OCI-LY7 (cell line): ENCODE measurements at regions of chr1 and their contacts with region 1.

Region 1: DNA sequence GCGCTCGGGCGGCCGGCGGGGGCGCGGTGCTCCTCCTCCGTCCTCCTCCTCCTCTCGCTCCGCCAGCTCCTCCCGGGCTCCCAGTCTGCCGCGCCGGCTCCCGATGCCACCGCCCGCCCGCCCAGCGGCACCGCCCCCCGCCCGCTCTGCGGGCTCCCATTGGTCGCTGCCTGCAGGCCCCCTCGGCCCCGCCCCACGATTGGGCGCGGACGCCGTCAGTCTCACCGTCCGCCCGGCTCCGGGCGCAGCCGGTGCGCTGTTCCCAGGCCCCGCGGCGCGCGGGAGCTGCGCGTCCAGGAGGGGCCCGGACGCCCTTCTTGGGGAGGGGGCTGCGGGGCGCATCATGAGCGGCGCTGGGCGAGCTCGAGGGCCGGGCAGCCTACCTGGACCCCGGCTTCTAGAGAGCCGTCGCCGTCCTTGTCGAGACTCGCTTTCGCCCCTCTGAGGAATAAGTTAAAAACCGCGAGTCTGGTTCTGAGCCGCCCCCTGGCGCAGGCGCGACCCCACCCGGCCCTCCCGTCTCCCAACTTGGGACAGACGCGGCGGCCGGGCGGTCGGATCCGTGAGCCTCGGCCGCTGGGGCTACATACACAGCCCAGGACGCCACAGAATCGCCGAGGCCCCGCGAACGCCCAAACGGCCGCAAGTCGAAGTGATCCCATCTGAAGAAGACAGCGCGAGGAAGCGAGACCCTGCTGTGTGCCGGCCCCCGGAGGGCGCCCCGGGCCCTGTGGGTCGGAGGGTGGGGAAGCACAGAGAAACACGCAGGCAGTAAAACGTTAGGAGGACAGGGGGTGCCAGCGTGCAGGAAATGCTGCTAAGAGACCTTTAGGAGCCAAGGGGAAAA is at the start of gene SIPA1L2:
- DNase-seq: peak; percentile 89
- H3K4me3 ChIP-seq: peak within 1 kb of the TSS; percentile 73
- H3K27ac ChIP-seq: peak within 1 kb of the TSS; percentile 62
- H3K4me1 ChIP-seq: peaks cover 42% of the 10 kb centered on the region
- CTCF ChIP-seq: peak; percentile 78
- total RNA-seq, gene SIPA1L2: 13.5 and 16.0 TPM in 2 replicates

Region 2: GRCh38 chr1:231866392-231867331 is 763.6 kb before region 1 on chr1:
- CTCF ChIA-PET with region 1: no interaction called
- POLR2A ChIA-PET with region 1: no interaction called
- intact Hi-C with region 1: loop called (anchors 1 kb)
- DNase-seq: peak; percentile 64
- H3K4me3 ChIP-seq: no peak overlapping the region
- H3K27ac ChIP-seq: no peak overlapping the region
- H3K4me1 ChIP-seq: no peaks in the 10 kb centered on the region
- CTCF ChIP-seq: peak; percentile 97

Region 3: DNA sequence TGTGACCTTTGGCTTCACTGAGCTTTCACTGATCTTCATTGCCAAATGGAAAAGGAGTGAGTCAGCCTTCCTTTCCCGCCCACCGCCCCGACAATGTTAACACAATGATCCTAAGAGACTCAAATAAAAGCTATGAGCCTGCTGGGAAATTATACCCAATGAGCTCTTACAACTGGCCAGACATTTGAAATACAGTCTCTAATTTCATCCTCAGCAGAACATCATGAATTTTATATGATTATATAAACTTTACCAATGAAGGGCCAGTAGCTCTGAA is 252.8 kb before region 1 on chr1:
- CTCF ChIA-PET with region 1: no interaction called
- POLR2A ChIA-PET with region 1: no interaction called
- intact Hi-C with region 1: no loop called
- DNase-seq: no peak
- H3K4me3 ChIP-seq: no peak overlapping the region
- H3K27ac ChIP-seq: no peak overlapping the region
- H3K4me1 ChIP-seq: no peaks in the 10 kb centered on the region
- CTCF ChIP-seq: no peak

Region 4: GRCh38 chr1:232548681-232549080 is 81.6 kb before region 1 on chr1:
- CTCF ChIA-PET with region 1: no interaction called
- POLR2A ChIA-PET with region 1: interaction called, 11 read pairs
- intact Hi-C with region 1: no loop called
- DNase-seq: no peak
- H3K4me3 ChIP-seq: no peak overlapping the region
- H3K27ac ChIP-seq: peak overlapping the region; percentile 2
- H3K4me1 ChIP-seq: peaks cover 67% of the 10 kb centered on the region
- CTCF ChIP-seq: no peak

Region 5: GRCh38 chr1:232562855-232563510 is 67.3 kb before region 1 on chr1:
- CTCF ChIA-PET with region 1: interaction called, 5 read pairs
- POLR2A ChIA-PET with region 1: interaction called, 9 read pairs
- intact Hi-C with region 1: loop called (anchors 2 kb)
- DNase-seq: peak; percentile 85
- H3K4me3 ChIP-seq: peak overlapping the region; percentile 33
- H3K27ac ChIP-seq: peak overlapping the region; percentile 96
- H3K4me1 ChIP-seq: peaks cover 100% of the 10 kb centered on the region
- CTCF ChIP-seq: no peak

Region 6: DNA sequence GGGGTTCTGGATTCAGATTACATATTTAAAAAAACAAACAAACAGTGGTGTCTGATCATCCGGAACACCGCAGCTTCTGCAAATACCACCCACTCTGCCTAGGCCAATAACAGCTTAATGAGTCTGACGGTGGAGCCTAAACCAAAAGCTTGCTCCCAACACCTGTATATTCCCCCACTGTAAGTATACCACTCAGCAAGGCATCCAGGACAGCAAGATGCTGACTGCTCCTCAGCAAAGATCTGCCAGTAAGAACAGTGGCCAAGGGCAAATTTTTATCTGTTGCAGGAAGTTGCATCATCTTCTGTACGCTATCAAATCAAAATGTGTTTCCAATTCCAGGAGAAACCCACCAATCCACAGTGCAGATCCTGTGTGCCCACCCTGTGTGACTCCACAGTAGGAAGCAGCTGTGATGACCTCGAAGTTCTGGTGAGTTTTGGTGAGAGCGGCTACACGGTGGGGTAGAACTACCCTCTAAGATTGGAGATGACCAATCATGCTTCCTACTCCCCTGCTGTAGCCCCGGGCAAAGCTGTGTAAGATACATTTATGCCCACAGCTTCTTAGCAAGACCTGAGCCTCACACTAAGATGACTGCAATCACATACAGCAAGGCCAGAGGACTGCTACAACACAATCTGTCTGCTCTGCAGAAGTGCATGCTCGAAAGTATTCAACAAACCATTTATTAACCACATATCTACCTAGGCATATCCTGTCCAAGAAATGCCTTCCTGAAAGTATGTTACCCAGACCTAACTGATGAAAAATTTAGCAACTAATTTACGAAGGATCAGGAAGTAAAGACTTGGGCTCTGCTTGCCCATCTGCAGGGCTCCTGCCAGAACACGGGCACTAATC is 30.9 kb before region 1 on chr1:
- CTCF ChIA-PET with region 1: interaction called, 6 read pairs
- POLR2A ChIA-PET with region 1: interaction called, 23 read pairs
- intact Hi-C with region 1: loop called (anchors 2 kb)
- DNase-seq: peak; percentile 69
- H3K4me3 ChIP-seq: peak overlapping the region; percentile 29
- H3K27ac ChIP-seq: peak overlapping the region; percentile 42
- H3K4me1 ChIP-seq: peaks cover 73% of the 10 kb centered on the region
- CTCF ChIP-seq: no peak

Region 7: DNA sequence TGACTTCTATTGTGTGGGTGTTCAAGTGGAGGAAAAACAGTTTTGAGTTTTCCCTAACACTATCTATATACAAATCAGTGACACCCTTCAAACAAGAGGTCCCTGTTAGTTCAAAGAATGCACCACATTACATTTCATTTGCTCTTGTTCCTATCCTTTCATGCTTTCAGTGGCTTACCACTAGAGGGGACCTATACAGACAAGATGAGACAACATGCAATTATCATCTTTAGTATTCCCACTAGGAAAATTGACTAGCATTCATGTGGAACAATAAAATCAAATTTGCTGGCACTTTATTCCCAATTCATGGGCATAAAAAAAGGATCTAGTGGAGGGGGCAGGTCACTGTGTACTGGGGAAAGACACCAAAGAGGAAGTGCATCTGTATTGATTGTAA is 13.0 kb after region 1 on chr1:
- CTCF ChIA-PET with region 1: no interaction called
- POLR2A ChIA-PET with region 1: no interaction called
- intact Hi-C with region 1: no loop called
- DNase-seq: no peak
- H3K4me3 ChIP-seq: no peak overlapping the region
- H3K27ac ChIP-seq: no peak overlapping the region
- H3K4me1 ChIP-seq: no peaks in the 10 kb centered on the region
- CTCF ChIP-seq: no peak

Region 8: GRCh38 chr1:232675260-232675659 is 45.0 kb after region 1 on chr1:
- CTCF ChIA-PET with region 1: no interaction called
- POLR2A ChIA-PET with region 1: no interaction called
- intact Hi-C with region 1: no loop called
- DNase-seq: no peak
- H3K4me3 ChIP-seq: no peak overlapping the region
- H3K27ac ChIP-seq: no peak overlapping the region
- H3K4me1 ChIP-seq: no peaks in the 10 kb centered on the region
- CTCF ChIP-seq: no peak

Region 9: GRCh38 chr1:232805269-232806185 is 175.3 kb after region 1 on chr1 and contains the start of gene MAP10:
- CTCF ChIA-PET with region 1: no interaction called
- POLR2A ChIA-PET with region 1: no interaction called
- intact Hi-C with region 1: loop called (anchors 10 kb)
- DNase-seq: peak; percentile 87
- H3K4me3 ChIP-seq: peak within 1 kb of the TSS; percentile 79
- H3K27ac ChIP-seq: no peak within 1 kb of the TSS
- H3K4me1 ChIP-seq: peaks cover 9% of the 10 kb centered on the region
- CTCF ChIP-seq: no peak
- total RNA-seq, gene MAP10: 2.9 and 4.9 TPM in 2 replicates

Region 10: GRCh38 chr1:233033361-233033760 is 403.1 kb after region 1 on chr1:
- CTCF ChIA-PET with region 1: no interaction called
- POLR2A ChIA-PET with region 1: interaction called, 3 read pairs
- intact Hi-C with region 1: loop called (anchors 5 kb)
- DNase-seq: no peak
- H3K4me3 ChIP-seq: no peak overlapping the region
- H3K27ac ChIP-seq: no peak overlapping the region
- H3K4me1 ChIP-seq: no peaks in the 10 kb centered on the region
- CTCF ChIP-seq: no peak

Region 11: GRCh38 chr1:233157245-233157644 is 527.0 kb after region 1 on chr1:
- CTCF ChIA-PET with region 1: no interaction called
- POLR2A ChIA-PET with region 1: no interaction called
- intact Hi-C with region 1: no loop called
- DNase-seq: no peak
- H3K4me3 ChIP-seq: no peak overlapping the region
- H3K27ac ChIP-seq: no peak overlapping the region
- H3K4me1 ChIP-seq: no peaks in the 10 kb centered on the region
- CTCF ChIP-seq: no peak